Right ventricle myocardium inferior (tissue), 1 donor: ENCODE measurements at regions of chr20 and their contacts with region 1.

Region 1: GRCh38 chr20:354298-355064 is 7.6 kb downstream of the NRSN2 start:
- DNase-seq: peak; percentile 86
- ATAC-seq: peak; percentile 93

Region 2: GRCh38 chr20:462199-462991 is 107.9 kb after region 1 on chr20 and contains the start of gene TBC1D20:
- intact Hi-C with region 1: loop called (anchors 5 kb)
- DNase-seq: peak; percentile 93
- ATAC-seq: peak; percentile 99
- total RNA-seq, gene TBC1D20: 25.2 TPM

Region 3: DNA sequence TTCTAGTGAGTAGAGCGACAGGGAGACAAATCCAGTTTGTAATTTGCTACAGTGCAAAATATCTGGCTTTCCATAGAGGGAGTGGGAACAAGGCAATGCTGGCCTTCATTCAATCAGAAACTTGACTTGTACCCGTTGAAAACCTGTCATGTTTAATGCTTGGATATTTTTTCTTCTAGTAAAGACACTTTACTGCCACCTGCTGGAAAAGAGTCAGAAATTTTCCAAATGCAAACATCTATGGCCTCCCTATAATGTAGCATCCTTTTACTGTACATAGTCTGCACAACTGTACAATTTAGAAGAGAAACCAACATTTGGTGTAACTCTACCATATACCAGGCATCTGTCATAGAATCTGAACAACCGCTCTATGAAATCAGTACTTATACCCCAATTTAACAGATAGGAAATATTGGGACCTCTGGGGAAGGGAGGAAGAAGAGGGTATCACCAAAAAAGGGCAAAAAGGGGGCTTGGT is 124.5 kb after region 1 on chr20:
- intact Hi-C with region 1: loop called (anchors 1 kb)
- DNase-seq: no peak
- ATAC-seq: no peak

Region 4: GRCh38 chr20:739736-740135 is 385.3 kb after region 1 on chr20:
- intact Hi-C with region 1: loop called (anchors 1 kb)
- DNase-seq: no peak
- ATAC-seq: no peak